Breast epithelium (tissue), 4 donors: ENCODE measurements at regions of chr7 and their contacts with region 1.

Region 1: GRCh38 chr7:17501441-17502210 is 203.2 kb downstream of the AHR start:
- DNase-seq: no peak
- H3K4me3 ChIP-seq: no peak overlapping the region
- H3K27ac ChIP-seq: no peak overlapping the region
- H3K4me1 ChIP-seq: no peaks in the 10 kb centered on the region
- H3K27me3 ChIP-seq: no peaks in the 10 kb centered on the region
- CTCF ChIP-seq: no peak
- POLR2A ChIP-seq: no peak

Region 2: GRCh38 chr7:17532861-17533404 is 31.3 kb after region 1 on chr7:
- intact Hi-C with region 1: loop called (anchors 2 kb)
- DNase-seq: no peak
- H3K4me3 ChIP-seq: no peak overlapping the region
- H3K27ac ChIP-seq: peak overlapping the region; percentile 58
- H3K4me1 ChIP-seq: peaks cover 0 to 6% of the 10 kb centered on the region in 2 donors
- H3K27me3 ChIP-seq: no peaks in the 10 kb centered on the region
- CTCF ChIP-seq: no peak
- POLR2A ChIP-seq: no peak

Region 3: DNA sequence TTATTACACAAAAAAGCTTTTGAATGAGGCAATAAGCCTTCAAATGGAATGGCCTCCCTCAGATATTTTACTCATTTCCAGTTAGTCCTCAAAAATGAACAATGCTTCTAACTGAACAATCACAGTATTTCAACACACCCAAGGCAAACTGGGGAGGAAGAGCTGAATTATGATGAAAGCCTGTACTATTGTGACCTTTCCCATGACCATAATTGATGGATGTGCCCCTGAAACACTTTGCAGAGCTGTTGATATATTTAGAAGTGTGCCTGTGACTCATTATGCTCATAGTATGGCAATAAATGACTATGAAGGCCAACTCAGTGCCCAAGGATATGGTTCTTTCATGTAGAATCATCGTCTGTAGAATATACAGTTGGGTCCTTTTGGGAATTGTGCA is 45.0 kb after region 1 on chr7:
- intact Hi-C with region 1: no loop called
- DNase-seq: no peak
- H3K4me3 ChIP-seq: no peak overlapping the region
- H3K27ac ChIP-seq: peak overlapping the region; percentile 23 to 81
- H3K4me1 ChIP-seq: peaks cover 0 to 6% of the 10 kb centered on the region in 2 donors
- H3K27me3 ChIP-seq: no peaks in the 10 kb centered on the region
- CTCF ChIP-seq: no peak
- POLR2A ChIP-seq: no peak